Astrocyte of the cerebellum (primary cell): ENCODE measurements at regions of chr5 and their contacts with region 1.

Region 1: DNA sequence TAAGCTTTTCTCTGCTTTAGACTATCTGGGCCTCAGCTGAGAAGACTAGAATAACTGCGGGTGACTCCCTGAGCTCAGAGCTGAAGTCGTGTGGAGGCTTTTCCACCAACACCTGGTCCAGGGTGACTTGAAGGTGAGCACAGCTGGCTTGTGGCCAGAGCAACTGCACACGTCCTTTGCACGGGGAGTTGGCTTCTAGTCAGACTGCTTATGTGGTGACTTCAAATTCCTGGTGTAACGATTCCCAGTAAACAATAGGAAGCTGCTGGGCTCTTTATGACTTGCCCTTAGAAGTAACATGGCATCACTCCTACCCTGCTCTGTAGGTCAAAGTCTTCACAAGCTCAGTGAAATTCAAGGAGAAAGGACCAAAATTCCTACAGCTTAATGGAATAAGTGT is 800.6 kb upstream of the CDH6 start:
- DNase-seq: no peak
- H3K4me3 ChIP-seq: no peak overlapping the region
- CTCF ChIP-seq: no peak

Region 2: GRCh38 chr5:31213705-31214121 is 820.8 kb after region 1 on chr5:
- in situ Hi-C with region 1: loop called (anchors 25 kb)
- DNase-seq: no peak
- H3K4me3 ChIP-seq: no peak overlapping the region
- CTCF ChIP-seq: no peak